ENCODE measurements at regions of chr3 and their contacts with region 1.

Region 1: GRCh38 chr3:46208167-46208704 is at the start of gene CCR1:
- DNase-seq: peak; percentile 77
- ATAC-seq: peak; percentile 73
- H3K4me3 Mint-ChIP-seq: no peak within 1 kb of the TSS
- H3K27ac Mint-ChIP-seq: no peak within 1 kb of the TSS
- H3K4me1 Mint-ChIP-seq: peaks cover 16% of the 10 kb centered on the region
- H3K27me3 Mint-ChIP-seq: peaks cover 2% of the 10 kb centered on the region
- total RNA-seq, gene CCR1: 0.14 to 0.16 TPM

Region 2: GRCh38 chr3:46098319-46098761 is 109.9 kb before region 1 on chr3:
- CTCF ChIA-PET with region 1: interaction called, 4 read pairs
- POLR2A ChIA-PET with region 1: no interaction called
- intact Hi-C with region 1: loop called (anchors 5 kb)
- DNase-seq: peak; percentile 73
- ATAC-seq: peak; percentile 76
- H3K4me3 Mint-ChIP-seq: no peak overlapping the region
- H3K27ac Mint-ChIP-seq: peak overlapping the region; percentile 62
- H3K4me1 Mint-ChIP-seq: peaks cover 31% of the 10 kb centered on the region
- H3K27me3 Mint-ChIP-seq: peaks cover 51% of the 10 kb centered on the region

Region 3: GRCh38 chr3:46427916-46428833 is 219.9 kb after region 1 on chr3:
- CTCF ChIA-PET with region 1: no interaction called
- POLR2A ChIA-PET with region 1: no interaction called
- intact Hi-C with region 1: no loop called
- DNase-seq: no peak
- ATAC-seq: no peak
- H3K4me3 Mint-ChIP-seq: no peak overlapping the region
- H3K27ac Mint-ChIP-seq: no peak overlapping the region
- H3K4me1 Mint-ChIP-seq: peaks cover 4% of the 10 kb centered on the region
- H3K27me3 Mint-ChIP-seq: no peaks in the 10 kb centered on the region

Region 4: GRCh38 chr3:46979151-46979978 is 771.1 kb after region 1 on chr3 and contains the start of gene NBEAL2:
- CTCF ChIA-PET with region 1: no interaction called
- POLR2A ChIA-PET with region 1: no interaction called
- intact Hi-C with region 1: no loop called
- DNase-seq: peak; percentile 99
- ATAC-seq: peak; percentile 86
- H3K4me3 Mint-ChIP-seq: peak within 1 kb of the TSS; percentile 92
- H3K27ac Mint-ChIP-seq: peak within 1 kb of the TSS; percentile 94
- H3K4me1 Mint-ChIP-seq: peaks cover 53% of the 10 kb centered on the region
- H3K27me3 Mint-ChIP-seq: no peaks in the 10 kb centered on the region
- total RNA-seq, gene NBEAL2: 83.4 to 84.9 TPM

Measured in activated CD4-positive, alpha-beta T cell treated with anti-CD3 and anti-CD28 coated beads for 36 hours (primary cell).